CD4-positive, alpha-beta T cell (primary cell): ENCODE measurements at regions of chr3 and their contacts with region 1.

Region 1: DNA sequence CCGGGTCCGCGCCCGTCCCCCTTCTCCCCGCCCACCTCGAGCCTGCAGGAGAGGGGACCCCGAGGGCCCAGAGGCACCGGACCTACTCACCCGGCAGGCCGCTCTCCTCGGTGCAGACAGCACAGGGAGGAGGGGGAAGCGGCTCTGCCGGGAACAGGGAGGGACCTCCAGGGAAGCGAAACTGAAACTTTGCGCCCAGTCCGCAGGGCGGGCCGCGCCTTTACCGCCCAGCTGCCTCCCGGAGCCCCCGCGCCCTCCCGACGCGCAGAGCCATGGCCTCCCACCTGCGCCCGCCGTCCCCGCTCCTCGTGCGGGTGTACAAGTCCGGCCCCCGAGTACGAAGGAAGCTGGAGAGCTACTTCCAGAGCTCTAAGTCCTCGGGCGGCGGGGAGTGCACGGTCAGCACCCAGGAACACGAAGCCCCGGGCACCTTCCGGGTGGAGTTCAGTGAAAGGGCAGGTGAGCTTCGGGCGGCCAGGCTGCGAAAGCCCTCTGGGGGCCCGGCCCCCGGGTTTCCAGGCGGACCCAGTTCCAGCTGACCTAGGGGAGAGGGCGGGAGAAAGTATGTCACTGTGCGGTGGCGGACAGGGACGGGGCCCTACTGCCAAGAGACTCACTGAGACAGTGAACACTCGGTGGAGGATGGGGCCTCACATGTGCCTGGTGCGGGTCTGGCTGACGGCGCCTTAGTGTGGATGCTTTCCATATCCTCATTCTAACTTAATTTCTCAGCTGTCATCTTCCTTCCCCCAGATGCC is at the starts of genes DTX3L and PARP9:
- DNase-seq: peak; percentile 47 to 95 (median 76)
- ATAC-seq: peak; percentile 91
- H3K4me3 ChIP-seq: peak within 1 kb of the TSS; percentile 92
- H3K4me3 Mint-ChIP-seq: peak within 1 kb of the TSS; percentile 95
- H3K27ac ChIP-seq: peak within 1 kb of the TSS; percentile 83 to 88
- H3K27ac Mint-ChIP-seq: peak within 1 kb of the TSS; percentile 89
- H3K4me1 ChIP-seq: peaks cover 67% of the 10 kb centered on the region
- H3K4me1 Mint-ChIP-seq: peaks cover 85% of the 10 kb centered on the region
- H3K27me3 ChIP-seq: no peaks in the 10 kb centered on the region
- H3K27me3 Mint-ChIP-seq: no peaks in the 10 kb centered on the region
- CTCF ChIP-seq: no peak
- total RNA-seq, gene DTX3L: 15.4 to 18.6 TPM
- total RNA-seq, gene PARP9: 13.2 to 14.4 TPM

Region 2: GRCh38 chr3:122146466-122146865 is 417.9 kb before region 1 on chr3:
- CTCF ChIA-PET with region 1: no interaction called
- POLR2A ChIA-PET with region 1: no interaction called
- intact Hi-C with region 1: no loop called
- DNase-seq: no peak
- ATAC-seq: no peak
- H3K4me3 ChIP-seq: no peak overlapping the region
- H3K4me3 Mint-ChIP-seq: no peak overlapping the region
- H3K27ac ChIP-seq: no peak overlapping the region
- H3K27ac Mint-ChIP-seq: no peak overlapping the region
- H3K4me1 ChIP-seq: no peaks in the 10 kb centered on the region
- H3K4me1 Mint-ChIP-seq: no peaks in the 10 kb centered on the region
- H3K27me3 ChIP-seq: no peaks in the 10 kb centered on the region
- H3K27me3 Mint-ChIP-seq: no peaks in the 10 kb centered on the region
- CTCF ChIP-seq: no peak

Region 3: DNA sequence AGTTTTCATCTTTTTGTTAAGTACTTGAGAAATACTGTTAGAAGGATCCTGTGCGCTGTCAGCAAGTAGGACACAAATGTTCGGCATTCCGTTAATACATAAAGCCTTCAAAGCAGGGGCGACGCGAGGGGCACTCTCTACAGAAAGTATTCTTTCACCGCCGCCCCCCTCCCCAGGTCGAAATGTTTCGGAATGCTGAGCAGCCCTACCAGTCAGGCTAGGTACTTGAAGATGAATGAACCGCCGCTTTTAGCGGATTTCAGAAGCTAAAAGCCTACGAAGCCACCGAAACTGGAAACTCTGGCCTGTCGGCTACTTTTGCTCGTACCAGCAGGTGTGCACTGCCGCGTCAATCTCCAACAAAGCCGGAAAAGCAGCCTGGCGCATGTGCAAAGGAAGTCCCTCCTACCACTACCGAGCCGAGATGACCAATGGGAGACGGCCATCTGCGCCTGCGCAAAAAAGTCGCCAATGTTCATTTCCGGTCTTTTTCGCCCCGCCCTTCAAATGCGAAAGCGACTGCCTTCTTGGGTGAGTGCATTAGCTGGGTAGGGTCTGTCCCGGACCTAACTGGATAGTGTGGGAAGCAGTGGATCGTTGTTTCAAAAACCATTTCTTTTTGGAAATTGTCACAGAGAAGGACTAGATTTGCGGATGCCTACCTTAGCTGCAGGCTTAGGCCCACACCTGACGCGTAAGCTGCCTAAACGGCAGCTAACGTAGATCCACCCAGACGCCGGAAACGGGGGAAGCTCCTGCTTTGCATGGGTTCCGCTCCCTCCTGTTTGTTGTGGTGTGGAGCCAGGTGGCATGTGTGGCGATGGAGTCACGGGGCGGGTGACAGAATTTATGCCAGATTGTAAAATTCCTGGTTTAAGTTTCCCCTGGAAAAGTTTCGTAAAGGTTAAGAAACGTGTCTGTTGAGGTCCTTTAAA is 148.3 kb before region 1 on chr3 and contains the start of gene WDR5B:
- CTCF ChIA-PET with region 1: no interaction called
- POLR2A ChIA-PET with region 1: interaction called, 14 read pairs
- intact Hi-C with region 1: no loop called
- DNase-seq: peak; percentile 96 to 99 (median 98)
- ATAC-seq: peak; percentile 87
- H3K4me3 ChIP-seq: peak within 1 kb of the TSS; percentile 76
- H3K4me3 Mint-ChIP-seq: peak within 1 kb of the TSS; percentile 97
- H3K27ac ChIP-seq: peak within 1 kb of the TSS; percentile 90 to 91
- H3K27ac Mint-ChIP-seq: peak within 1 kb of the TSS; percentile 100
- H3K4me1 ChIP-seq: peaks cover 22% of the 10 kb centered on the region
- H3K4me1 Mint-ChIP-seq: peaks cover 59% of the 10 kb centered on the region
- H3K27me3 ChIP-seq: no peaks in the 10 kb centered on the region
- H3K27me3 Mint-ChIP-seq: no peaks in the 10 kb centered on the region
- CTCF ChIP-seq: no peak
- total RNA-seq, gene WDR5B: 2.3 to 2.4 TPM

Region 4: DNA sequence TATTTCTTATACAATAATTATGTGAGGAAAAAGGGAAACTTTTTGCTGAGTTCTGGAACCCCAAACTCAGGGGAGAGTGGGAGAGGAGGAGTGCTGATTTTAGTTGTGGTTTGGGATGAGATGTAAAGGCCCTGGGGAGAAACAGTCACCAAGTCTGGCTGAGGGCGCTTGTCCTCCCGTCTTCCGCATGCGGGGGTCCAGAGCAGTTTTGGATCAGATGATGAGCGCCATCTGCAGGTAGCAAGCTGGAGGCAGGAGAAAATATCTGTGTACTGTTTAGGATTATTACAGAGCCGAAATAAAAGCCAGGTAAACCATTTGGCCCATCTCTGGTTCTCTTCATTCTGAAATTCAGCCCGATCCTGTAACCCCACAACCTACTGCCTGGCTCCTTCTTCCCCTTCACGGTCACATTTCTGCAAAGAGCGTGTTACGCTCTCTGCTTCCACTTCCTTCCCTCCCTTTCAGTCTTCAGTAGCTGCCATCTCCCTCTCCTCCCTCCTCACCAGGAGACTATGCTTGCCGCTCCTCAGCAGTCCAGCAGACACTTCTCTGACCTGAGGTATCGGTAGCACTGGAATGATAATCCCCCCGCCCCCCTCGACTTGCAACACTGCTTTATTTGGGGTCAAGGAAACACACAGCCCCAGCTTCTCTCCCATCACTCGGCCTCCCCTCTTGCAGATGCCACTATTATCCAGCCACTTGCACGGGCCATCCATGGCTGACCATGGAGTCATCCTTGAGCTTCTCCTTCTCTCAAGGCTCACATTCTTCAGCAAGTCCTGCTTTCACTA is 114.9 kb after region 1 on chr3:
- CTCF ChIA-PET with region 1: interaction called, 45 read pairs
- POLR2A ChIA-PET with region 1: interaction called, 94 read pairs
- intact Hi-C with region 1: loop called (anchors 1 kb)
- DNase-seq: peak; percentile 71 to 92 (median 78)
- ATAC-seq: peak; percentile 68
- H3K4me3 ChIP-seq: peak overlapping the region; percentile 93
- H3K4me3 Mint-ChIP-seq: peak overlapping the region; percentile 93
- H3K27ac ChIP-seq: peak overlapping the region; percentile 88 to 91
- H3K27ac Mint-ChIP-seq: peak overlapping the region; percentile 96
- H3K4me1 ChIP-seq: peaks cover 46% of the 10 kb centered on the region
- H3K4me1 Mint-ChIP-seq: peaks cover 54% of the 10 kb centered on the region
- H3K27me3 ChIP-seq: no peaks in the 10 kb centered on the region
- H3K27me3 Mint-ChIP-seq: no peaks in the 10 kb centered on the region
- CTCF ChIP-seq: peak; percentile 83

Region 5: DNA sequence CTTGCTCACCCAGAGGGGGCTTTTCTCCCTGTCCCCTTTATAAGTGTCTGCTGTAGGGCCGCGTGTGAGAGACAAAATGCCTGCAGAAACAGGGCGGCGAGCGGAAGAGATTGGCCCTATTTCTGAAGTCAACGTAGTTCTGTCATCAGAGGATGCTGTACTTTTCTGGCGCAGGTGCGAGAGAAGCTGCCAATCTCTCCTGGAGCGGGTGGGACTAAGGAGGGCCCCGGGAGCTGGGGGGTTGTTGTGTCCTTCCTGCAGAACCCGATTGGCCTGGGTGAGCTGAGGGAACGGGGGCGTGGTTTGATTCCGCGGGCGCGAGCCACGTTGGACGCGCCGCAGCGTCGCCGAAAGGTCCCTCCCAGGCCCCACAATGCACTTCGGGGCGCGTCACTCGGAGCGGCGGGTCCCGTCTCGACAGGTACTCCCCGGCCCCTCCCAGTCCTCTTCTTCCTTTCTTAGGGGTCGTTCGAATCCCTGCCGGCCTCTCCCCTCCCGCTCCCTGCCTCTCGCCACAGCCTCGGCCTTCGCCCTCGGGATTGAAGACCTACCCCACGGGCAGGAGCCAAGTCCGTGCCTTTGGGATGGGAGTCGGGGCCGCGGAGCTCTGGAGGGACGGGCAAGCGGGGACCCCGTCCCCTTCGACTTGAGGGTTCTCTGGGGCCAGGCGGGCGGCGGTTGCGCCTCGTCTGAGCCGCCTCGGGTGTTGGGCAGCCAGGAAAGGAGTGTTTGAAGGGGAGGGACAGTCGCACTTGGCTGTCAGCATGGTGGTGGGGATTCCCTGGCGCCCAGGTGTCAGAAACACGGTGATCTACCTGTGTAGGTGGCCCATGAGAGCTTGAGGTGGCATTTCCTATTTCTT is 637.5 kb after region 1 on chr3 and contains the start of gene SEC22A:
- CTCF ChIA-PET with region 1: no interaction called
- POLR2A ChIA-PET with region 1: interaction called, 5 read pairs
- intact Hi-C with region 1: loop called (anchors 10 kb)
- DNase-seq: peak; percentile 88 to 99 (median 94)
- ATAC-seq: peak; percentile 95
- H3K4me3 ChIP-seq: peak within 1 kb of the TSS; percentile 88
- H3K4me3 Mint-ChIP-seq: peak within 1 kb of the TSS; percentile 89
- H3K27ac ChIP-seq: peak within 1 kb of the TSS; percentile 96 to 98
- H3K27ac Mint-ChIP-seq: peak within 1 kb of the TSS; percentile 98
- H3K4me1 ChIP-seq: peaks cover 20% of the 10 kb centered on the region
- H3K4me1 Mint-ChIP-seq: peaks cover 44% of the 10 kb centered on the region
- H3K27me3 ChIP-seq: no peaks in the 10 kb centered on the region
- H3K27me3 Mint-ChIP-seq: no peaks in the 10 kb centered on the region
- CTCF ChIP-seq: no peak
- total RNA-seq, gene SEC22A: 7.9 to 11.5 TPM

Region 6: GRCh38 chr3:123559040-123559861 is 994.9 kb after region 1 on chr3:
- CTCF ChIA-PET with region 1: no interaction called
- POLR2A ChIA-PET with region 1: no interaction called
- intact Hi-C with region 1: loop called in 1 of 2 experiments (anchors 2 kb)
- DNase-seq: peak in 4 of 14 experiments; percentile 27 to 75 (median 66)
- ATAC-seq: no peak
- H3K4me3 ChIP-seq: no peak overlapping the region
- H3K4me3 Mint-ChIP-seq: no peak overlapping the region
- H3K27ac ChIP-seq: no peak overlapping the region
- H3K27ac Mint-ChIP-seq: no peak overlapping the region
- H3K4me1 ChIP-seq: no peaks in the 10 kb centered on the region
- H3K4me1 Mint-ChIP-seq: no peaks in the 10 kb centered on the region
- H3K27me3 ChIP-seq: no peaks in the 10 kb centered on the region
- H3K27me3 Mint-ChIP-seq: no peaks in the 10 kb centered on the region
- CTCF ChIP-seq: peak; percentile 98